Activated CD4-positive, alpha-beta memory T cell treated with anti-CD3 and anti-CD28 coated beads for 36 hours (primary cell): ENCODE measurements at regions of chr9 and their contacts with region 1.

Region 1: GRCh38 chr9:22238809-22239684 is 207.6 kb upstream of the DMRTA1 start:
- DNase-seq: no peak
- H3K4me3 Mint-ChIP-seq: no peak overlapping the region
- H3K27ac Mint-ChIP-seq: no peak overlapping the region
- H3K4me1 Mint-ChIP-seq: peaks cover 35% of the 10 kb centered on the region
- H3K27me3 Mint-ChIP-seq: peaks cover 12% of the 10 kb centered on the region

Region 2: GRCh38 chr9:22119537-22120158 is 119.4 kb before region 1 on chr9:
- CTCF ChIA-PET with region 1: interaction called, 14 read pairs
- POLR2A ChIA-PET with region 1: no interaction called
- intact Hi-C with region 1: no loop called
- DNase-seq: peak; percentile 15
- H3K4me3 Mint-ChIP-seq: no peak overlapping the region
- H3K27ac Mint-ChIP-seq: no peak overlapping the region
- H3K4me1 Mint-ChIP-seq: no peaks in the 10 kb centered on the region
- H3K27me3 Mint-ChIP-seq: peaks cover 21% of the 10 kb centered on the region

Region 3: DNA sequence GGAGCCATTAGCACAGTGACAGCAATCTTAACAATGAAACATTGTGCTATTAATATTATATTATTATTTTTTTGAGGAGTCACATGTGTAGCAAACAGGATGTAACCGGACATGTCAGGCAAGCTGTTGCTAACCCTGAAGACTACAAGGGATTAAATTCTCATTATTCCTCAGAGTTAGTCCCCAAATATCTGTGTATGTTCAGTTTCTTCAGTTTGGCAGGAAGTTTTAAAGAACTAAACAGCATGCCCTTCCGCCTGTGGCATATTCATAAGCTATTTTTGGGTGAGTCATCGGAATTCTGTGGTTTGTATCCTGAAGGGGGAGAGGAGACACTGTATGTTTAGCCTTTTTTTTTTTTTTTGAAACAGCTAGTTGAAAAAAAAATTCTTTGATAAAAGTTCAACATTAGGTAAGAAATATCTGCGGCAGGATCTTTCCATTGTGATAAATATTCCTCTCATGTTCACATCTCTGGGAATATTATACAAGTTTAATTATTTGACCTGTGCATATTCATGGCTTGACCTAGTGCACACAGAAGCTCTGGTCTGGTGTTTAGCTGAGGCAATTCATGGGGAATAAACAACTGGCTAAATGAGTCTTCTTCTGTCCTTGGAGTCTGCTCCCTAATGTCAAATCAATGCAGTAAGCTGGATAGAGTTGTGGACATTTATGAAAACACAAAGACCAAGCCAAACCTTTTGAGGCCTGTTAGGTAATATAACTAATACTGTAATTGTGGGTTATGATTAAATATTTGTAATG is 27.3 kb before region 1 on chr9:
- CTCF ChIA-PET with region 1: interaction called, 4 read pairs
- POLR2A ChIA-PET with region 1: no interaction called
- intact Hi-C with region 1: loop called (anchors 2 kb)
- DNase-seq: no peak
- H3K4me3 Mint-ChIP-seq: no peak overlapping the region
- H3K27ac Mint-ChIP-seq: no peak overlapping the region
- H3K4me1 Mint-ChIP-seq: peaks cover 32% of the 10 kb centered on the region
- H3K27me3 Mint-ChIP-seq: no peaks in the 10 kb centered on the region

Region 4: DNA sequence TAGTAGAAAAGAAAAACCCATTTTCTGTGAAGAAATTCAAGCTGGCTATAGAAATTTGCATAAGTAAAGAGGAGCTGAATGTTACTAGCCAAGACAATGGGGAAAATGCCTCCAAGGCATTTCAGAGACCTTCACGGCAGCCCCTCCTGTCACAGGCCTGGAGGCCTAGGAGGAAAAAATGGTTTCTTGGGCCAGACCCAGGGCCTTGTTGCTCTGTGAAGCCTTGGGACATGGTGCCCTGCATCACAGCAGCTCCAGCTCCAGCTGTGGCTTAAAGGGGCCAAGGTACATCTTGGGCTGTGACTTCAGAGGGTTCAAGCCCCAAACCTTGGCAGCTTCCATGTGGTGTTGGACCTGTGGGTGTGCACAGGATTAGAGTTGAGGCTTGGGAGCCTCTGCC is 77.6 kb after region 1 on chr9:
- CTCF ChIA-PET with region 1: no interaction called
- POLR2A ChIA-PET with region 1: no interaction called
- intact Hi-C with region 1: no loop called
- DNase-seq: no peak
- H3K4me3 Mint-ChIP-seq: no peak overlapping the region
- H3K27ac Mint-ChIP-seq: no peak overlapping the region
- H3K4me1 Mint-ChIP-seq: no peaks in the 10 kb centered on the region
- H3K27me3 Mint-ChIP-seq: no peaks in the 10 kb centered on the region